CD4-positive, alpha-beta T cell (primary cell): ENCODE measurements at regions of chr16 and their contacts with region 1.

Region 1: DNA sequence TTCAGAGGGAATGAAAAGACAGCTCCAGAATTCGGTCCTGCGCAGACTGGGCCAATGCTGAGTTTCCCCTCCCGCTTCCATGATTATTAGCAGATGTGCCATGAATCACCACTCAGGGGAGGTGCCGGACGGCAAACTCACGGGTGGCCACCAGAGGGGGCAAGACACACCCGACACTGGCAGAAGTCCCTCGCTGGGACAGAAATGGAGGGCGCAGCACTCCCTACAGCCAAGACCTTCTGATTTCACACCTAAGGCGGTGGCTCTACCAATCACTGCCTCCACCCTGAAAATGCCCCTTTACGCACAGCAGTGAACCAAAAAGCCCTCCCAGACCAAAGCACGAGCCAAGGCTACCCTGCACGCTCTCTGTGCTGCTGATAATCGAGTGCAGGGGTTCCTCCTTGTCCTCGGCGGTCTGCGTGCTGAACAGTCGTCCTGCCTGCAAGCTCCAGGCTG is 26.8 kb downstream of the TRAP1 start:
- DNase-seq: peak; percentile 71 to 89 (median 80)
- ATAC-seq: peak; percentile 99
- H3K4me3 ChIP-seq: no peak overlapping the region
- H3K4me3 Mint-ChIP-seq: no peak overlapping the region
- H3K27ac ChIP-seq: no peak overlapping the region
- H3K27ac Mint-ChIP-seq: peak overlapping the region; percentile 25
- H3K4me1 ChIP-seq: peaks cover 10% of the 10 kb centered on the region
- H3K4me1 Mint-ChIP-seq: peaks cover 7% of the 10 kb centered on the region
- H3K27me3 ChIP-seq: no peaks in the 10 kb centered on the region
- H3K27me3 Mint-ChIP-seq: no peaks in the 10 kb centered on the region
- CTCF ChIP-seq: peak; percentile 91

Region 2: DNA sequence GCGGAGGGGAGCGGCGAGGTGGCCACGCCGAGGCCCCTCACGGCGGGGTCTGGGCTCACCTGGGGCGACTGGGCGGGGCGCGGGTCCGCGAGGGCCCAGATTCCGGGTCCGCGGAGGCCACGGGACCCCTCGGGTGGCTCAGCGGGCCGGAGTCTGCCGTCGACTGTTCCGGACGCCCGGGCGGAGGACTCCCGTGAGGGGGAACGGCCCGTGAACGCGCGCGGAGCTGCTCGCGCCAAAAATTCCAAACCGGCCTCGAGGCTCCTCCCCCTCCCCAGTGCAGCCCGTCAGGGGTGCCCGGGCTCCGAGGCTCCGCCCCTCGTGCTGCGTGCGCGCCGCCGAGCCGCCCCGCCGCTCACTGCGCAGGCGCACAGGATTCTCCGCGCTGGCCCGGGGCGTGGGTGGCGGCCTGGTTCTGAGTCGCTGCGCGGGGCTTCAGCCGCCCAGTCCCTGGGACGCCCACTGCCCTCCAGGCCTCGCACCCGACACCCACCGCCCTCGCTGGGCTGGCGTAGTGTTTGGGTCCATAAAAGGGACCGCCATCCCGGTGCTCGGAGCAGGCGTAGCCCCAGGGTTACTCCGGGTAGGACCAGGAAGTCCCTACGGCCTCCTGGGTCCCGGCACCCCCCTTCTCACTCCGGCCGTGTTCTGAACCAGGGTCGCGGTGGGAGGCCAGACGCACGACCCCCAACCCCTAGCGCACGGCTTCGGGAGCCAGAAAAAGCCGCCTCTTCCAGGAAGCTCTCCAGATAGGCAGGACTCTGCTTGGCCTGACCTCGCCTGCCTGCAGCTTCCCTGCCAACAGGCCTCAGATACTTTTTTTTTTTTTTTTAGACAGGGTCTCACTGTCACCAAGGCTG is 710.0 kb before region 1 on chr16 and contains the start of gene PKMYT1:
- CTCF ChIA-PET with region 1: no interaction called
- POLR2A ChIA-PET with region 1: no interaction called
- intact Hi-C with region 1: no loop called
- DNase-seq: peak; percentile 86 to 98 (median 94)
- ATAC-seq: peak; percentile 95
- H3K4me3 ChIP-seq: peak within 1 kb of the TSS; percentile 93
- H3K4me3 Mint-ChIP-seq: peak within 1 kb of the TSS; percentile 82
- H3K27ac ChIP-seq: peak within 1 kb of the TSS; percentile 50 to 73
- H3K27ac Mint-ChIP-seq: peak within 1 kb of the TSS; percentile 49
- H3K4me1 ChIP-seq: peaks cover 29% of the 10 kb centered on the region
- H3K4me1 Mint-ChIP-seq: no peaks in the 10 kb centered on the region
- H3K27me3 ChIP-seq: peaks cover 0 to 3% of the 10 kb centered on the region in 2 experiments
- H3K27me3 Mint-ChIP-seq: no peaks in the 10 kb centered on the region
- CTCF ChIP-seq: no peak
- total RNA-seq, gene PKMYT1: 0.47 to 0.60 TPM

Region 3: DNA sequence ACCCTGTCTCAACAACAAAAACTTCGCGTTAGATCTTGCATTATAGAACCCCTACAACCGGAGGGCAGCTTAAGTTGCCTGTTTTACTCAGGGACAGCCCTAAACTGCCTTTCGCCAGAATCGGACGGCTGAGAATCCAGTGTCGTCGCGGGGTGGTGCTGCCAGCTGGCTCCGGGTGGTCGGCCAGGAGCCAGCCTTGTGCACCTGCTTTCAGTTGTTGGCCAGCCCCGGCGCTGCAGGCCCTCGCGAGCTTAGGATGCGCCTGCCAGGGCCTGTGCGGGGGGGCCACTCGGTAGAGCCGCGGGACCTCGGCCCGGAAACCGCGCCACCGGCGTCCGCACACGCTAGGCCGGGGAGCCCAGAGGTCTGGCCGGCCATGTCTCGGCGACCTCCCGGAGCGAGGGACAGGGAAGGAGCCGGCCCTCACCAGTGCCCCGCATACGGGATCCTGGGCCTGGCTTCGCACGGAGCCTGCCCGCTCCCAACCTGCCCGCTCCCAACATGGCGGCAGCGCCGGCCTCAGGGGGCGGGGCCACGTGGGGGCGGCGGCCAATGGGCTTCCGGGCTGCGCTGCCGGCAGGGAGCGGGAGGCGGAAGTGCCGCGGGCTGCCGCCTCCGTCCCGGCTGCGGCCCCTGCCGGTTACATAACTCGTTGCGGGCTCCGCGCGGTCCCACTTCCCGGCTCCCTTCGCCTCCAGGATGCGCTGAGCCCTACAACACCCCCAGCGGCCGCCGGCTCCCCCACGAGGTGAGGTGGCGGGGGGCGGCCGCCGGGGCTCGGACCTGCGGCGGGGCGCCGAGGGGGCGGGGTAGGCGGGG is 232.9 kb before region 1 on chr16:
- CTCF ChIA-PET with region 1: no interaction called
- POLR2A ChIA-PET with region 1: no interaction called
- intact Hi-C with region 1: no loop called
- DNase-seq: peak; percentile 74 to 97 (median 90)
- ATAC-seq: peak; percentile 86
- H3K4me3 ChIP-seq: peak overlapping the region; percentile 83
- H3K4me3 Mint-ChIP-seq: peak overlapping the region; percentile 76
- H3K27ac ChIP-seq: peak overlapping the region; percentile 84 to 90
- H3K27ac Mint-ChIP-seq: peak overlapping the region; percentile 83
- H3K4me1 ChIP-seq: peaks cover 46% of the 10 kb centered on the region
- H3K4me1 Mint-ChIP-seq: peaks cover 59% of the 10 kb centered on the region
- H3K27me3 ChIP-seq: no peaks in the 10 kb centered on the region
- H3K27me3 Mint-ChIP-seq: no peaks in the 10 kb centered on the region
- CTCF ChIP-seq: peak; percentile 39

Region 4: DNA sequence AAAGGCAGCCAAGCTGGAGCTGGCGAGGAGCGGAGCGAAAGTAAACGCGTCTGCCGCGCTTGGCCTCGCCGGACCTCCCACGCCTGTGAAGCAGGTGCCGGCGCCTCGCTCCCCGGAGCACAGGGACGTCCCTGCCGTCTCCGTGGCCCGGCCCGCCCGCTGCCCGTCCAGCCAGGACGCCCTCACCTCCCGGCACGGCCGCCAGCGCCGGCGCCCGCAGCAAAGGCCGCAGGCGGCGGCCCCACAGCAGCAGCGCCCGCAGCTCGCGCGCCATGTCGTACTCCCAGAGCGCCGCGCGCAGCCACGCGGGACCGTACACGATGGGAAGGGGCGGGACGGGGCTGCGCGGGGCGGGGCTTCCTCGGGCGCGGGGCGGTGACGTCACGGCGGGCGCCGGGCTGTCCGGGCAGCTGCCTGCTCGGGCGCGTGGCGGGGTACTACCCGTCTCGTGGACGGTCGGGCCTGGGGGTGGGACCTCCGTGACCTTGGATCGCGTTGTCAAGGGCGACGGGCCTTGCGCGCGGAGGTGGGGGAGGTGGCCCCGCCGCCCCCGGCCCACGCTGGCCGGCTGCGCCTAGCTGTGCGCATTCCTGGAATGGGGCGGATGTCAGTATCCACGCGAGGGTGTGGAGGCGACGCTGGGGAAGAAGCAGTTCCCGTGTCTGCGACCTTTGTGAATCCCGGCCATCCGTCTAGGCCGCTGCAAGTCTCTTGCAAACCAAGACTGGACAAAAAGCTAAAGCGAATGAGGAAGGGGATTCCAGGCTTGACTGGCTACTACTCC is 26.9 kb after region 1 on chr16 and contains the start of gene TRAP1:
- CTCF ChIA-PET with region 1: no interaction called
- POLR2A ChIA-PET with region 1: no interaction called
- intact Hi-C with region 1: loop called in 1 of 2 experiments (anchors 1 kb)
- DNase-seq: peak; percentile 83 to 96 (median 91)
- ATAC-seq: peak; percentile 98
- H3K4me3 ChIP-seq: peak within 1 kb of the TSS; percentile 98
- H3K4me3 Mint-ChIP-seq: peak within 1 kb of the TSS; percentile 92
- H3K27ac ChIP-seq: peak within 1 kb of the TSS; percentile 72 to 92
- H3K27ac Mint-ChIP-seq: peak within 1 kb of the TSS; percentile 89
- H3K4me1 ChIP-seq: peaks cover 33% of the 10 kb centered on the region
- H3K4me1 Mint-ChIP-seq: peaks cover 31% of the 10 kb centered on the region
- H3K27me3 ChIP-seq: no peaks in the 10 kb centered on the region
- H3K27me3 Mint-ChIP-seq: no peaks in the 10 kb centered on the region
- CTCF ChIP-seq: no peak
- total RNA-seq, gene TRAP1: 68.0 to 75.9 TPM

Region 5: GRCh38 chr16:3740934-3741333 is 50.4 kb after region 1 on chr16:
- CTCF ChIA-PET with region 1: no interaction called
- POLR2A ChIA-PET with region 1: no interaction called
- intact Hi-C with region 1: loop called in 1 of 2 experiments (anchors 5 kb)
- DNase-seq: no peak
- ATAC-seq: no peak
- H3K4me3 ChIP-seq: no peak overlapping the region
- H3K4me3 Mint-ChIP-seq: no peak overlapping the region
- H3K27ac ChIP-seq: no peak overlapping the region
- H3K27ac Mint-ChIP-seq: no peak overlapping the region
- H3K4me1 ChIP-seq: no peaks in the 10 kb centered on the region
- H3K4me1 Mint-ChIP-seq: no peaks in the 10 kb centered on the region
- H3K27me3 ChIP-seq: no peaks in the 10 kb centered on the region
- H3K27me3 Mint-ChIP-seq: no peaks in the 10 kb centered on the region
- CTCF ChIP-seq: no peak

Region 6: GRCh38 chr16:3938848-3939624 is 248.5 kb after region 1 on chr16:
- CTCF ChIA-PET with region 1: no interaction called
- POLR2A ChIA-PET with region 1: no interaction called
- intact Hi-C with region 1: loop called in 1 of 2 experiments (anchors 2 kb)
- DNase-seq: peak; percentile 42 to 82 (median 61)
- ATAC-seq: peak; percentile 84
- H3K4me3 ChIP-seq: peak overlapping the region; percentile 33
- H3K4me3 Mint-ChIP-seq: no peak overlapping the region
- H3K27ac ChIP-seq: no peak overlapping the region
- H3K27ac Mint-ChIP-seq: no peak overlapping the region
- H3K4me1 ChIP-seq: peaks cover 11% of the 10 kb centered on the region
- H3K4me1 Mint-ChIP-seq: no peaks in the 10 kb centered on the region
- H3K27me3 ChIP-seq: peaks cover 0 to 6% of the 10 kb centered on the region in 2 experiments
- H3K27me3 Mint-ChIP-seq: peaks cover 3% of the 10 kb centered on the region
- CTCF ChIP-seq: peak; percentile 96

Region 7: DNA sequence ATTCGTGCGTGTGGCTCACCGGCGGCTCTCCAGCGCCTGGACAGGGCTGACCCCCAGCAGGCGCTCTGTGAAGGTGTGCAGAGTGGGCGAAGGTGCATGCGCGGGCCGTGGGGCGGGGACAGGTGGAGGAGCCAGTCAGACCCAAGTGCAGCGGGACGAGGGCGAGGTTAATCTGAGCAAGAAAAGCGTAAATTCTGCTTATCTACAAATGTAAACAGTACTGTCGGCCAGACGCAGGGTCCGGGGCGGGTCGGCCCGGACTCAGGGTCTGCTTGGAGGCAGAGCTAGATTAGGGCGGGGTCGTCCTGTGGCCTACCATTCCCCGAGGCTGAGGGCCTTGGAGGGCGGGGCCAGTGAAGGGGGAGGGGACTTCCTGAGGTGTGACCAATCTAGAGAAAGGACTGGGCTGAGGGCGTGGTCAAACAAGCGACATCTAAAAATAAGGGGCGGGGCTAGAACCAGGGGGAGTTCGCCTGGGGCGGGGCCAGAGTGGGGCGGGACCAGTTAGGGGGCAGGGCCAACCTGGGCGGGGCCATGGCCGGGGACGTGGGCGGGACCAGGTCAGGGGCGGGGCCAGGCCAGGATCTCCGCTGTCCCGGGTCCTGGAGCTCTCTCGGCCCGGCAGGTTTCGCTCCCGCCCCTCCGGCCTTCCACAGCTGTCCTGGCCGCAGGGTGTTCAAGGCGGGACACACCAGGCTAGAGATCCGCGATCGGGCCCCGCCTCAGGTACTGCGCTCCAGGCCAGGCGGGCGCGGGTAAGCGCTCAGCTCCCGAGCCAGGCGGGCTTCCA is 1267.4 kb after region 1 on chr16 and contains the start of gene SEC14L5:
- CTCF ChIA-PET with region 1: no interaction called
- POLR2A ChIA-PET with region 1: no interaction called
- intact Hi-C with region 1: loop called in 1 of 2 experiments (anchors 5 kb)
- DNase-seq: peak; percentile 79 to 95 (median 89)
- ATAC-seq: peak; percentile 93
- H3K4me3 ChIP-seq: peak within 1 kb of the TSS; percentile 52
- H3K4me3 Mint-ChIP-seq: peak within 1 kb of the TSS; percentile 86
- H3K27ac ChIP-seq: no peak within 1 kb of the TSS
- H3K27ac Mint-ChIP-seq: no peak within 1 kb of the TSS
- H3K4me1 ChIP-seq: peaks cover 26% of the 10 kb centered on the region
- H3K4me1 Mint-ChIP-seq: peaks cover 24% of the 10 kb centered on the region
- H3K27me3 ChIP-seq: peaks cover 13 to 16% of the 10 kb centered on the region in 2 experiments
- H3K27me3 Mint-ChIP-seq: peaks cover 53% of the 10 kb centered on the region
- CTCF ChIP-seq: no peak
- total RNA-seq, gene SEC14L5: not detected